Psoas muscle (tissue), 8 donors: ENCODE measurements at regions of chr5 and their contacts with region 1.

Region 1: GRCh38 chr5:7494481-7495130 is 98.7 kb downstream of the ADCY2 start:
- DNase-seq: peak; percentile 43 to 72
- ATAC-seq: peak; percentile 72 to 89 (median 84)
- H3K4me3 ChIP-seq: no peak overlapping the region
- H3K27ac ChIP-seq: peak overlapping the region; percentile 1
- H3K4me1 ChIP-seq: peaks cover 49% of the 10 kb centered on the region
- H3K27me3 ChIP-seq: no peaks in the 10 kb centered on the region
- CTCF ChIP-seq: no peak

Region 2: DNA sequence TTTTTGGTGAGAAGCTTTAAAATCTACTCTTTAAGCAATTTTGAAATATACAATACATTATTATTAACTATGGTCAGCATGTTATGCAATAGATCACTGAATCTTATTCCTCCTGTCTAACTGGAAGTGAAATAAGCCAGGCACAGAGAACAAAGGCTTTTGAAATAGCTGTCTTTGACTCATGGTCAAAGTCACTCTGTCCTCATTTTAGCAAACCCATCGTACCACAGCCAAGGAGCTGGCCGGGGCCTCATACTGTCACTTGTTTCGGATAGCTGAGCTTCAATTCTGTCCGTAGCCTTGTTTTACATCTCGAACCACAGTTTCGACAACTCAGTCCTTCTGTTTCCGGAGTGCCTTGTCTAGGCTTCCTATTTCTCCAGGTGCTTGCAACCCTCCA is 79.5 kb before region 1 on chr5:
- intact Hi-C with region 1: loop called in 1 of 2 experiments (anchors 5 kb)
- DNase-seq: peak in 1 of 2 donors; percentile 73
- ATAC-seq: peak; percentile 51 to 72 (median 68)
- H3K4me3 ChIP-seq: peak overlapping the region; percentile 9
- H3K27ac ChIP-seq: peak overlapping the region; percentile 92
- H3K4me1 ChIP-seq: peaks cover 68% of the 10 kb centered on the region
- H3K27me3 ChIP-seq: no peaks in the 10 kb centered on the region
- CTCF ChIP-seq: no peak